Activated CD4-positive, alpha-beta memory T cell treated with anti-CD3 and anti-CD28 coated beads, Interleukin-2, amount 10 ng/mL, durations not matched to agents 7 days and 5 days (primary cell): ENCODE measurements at regions of chr9 and their contacts with region 1.

Region 1: DNA sequence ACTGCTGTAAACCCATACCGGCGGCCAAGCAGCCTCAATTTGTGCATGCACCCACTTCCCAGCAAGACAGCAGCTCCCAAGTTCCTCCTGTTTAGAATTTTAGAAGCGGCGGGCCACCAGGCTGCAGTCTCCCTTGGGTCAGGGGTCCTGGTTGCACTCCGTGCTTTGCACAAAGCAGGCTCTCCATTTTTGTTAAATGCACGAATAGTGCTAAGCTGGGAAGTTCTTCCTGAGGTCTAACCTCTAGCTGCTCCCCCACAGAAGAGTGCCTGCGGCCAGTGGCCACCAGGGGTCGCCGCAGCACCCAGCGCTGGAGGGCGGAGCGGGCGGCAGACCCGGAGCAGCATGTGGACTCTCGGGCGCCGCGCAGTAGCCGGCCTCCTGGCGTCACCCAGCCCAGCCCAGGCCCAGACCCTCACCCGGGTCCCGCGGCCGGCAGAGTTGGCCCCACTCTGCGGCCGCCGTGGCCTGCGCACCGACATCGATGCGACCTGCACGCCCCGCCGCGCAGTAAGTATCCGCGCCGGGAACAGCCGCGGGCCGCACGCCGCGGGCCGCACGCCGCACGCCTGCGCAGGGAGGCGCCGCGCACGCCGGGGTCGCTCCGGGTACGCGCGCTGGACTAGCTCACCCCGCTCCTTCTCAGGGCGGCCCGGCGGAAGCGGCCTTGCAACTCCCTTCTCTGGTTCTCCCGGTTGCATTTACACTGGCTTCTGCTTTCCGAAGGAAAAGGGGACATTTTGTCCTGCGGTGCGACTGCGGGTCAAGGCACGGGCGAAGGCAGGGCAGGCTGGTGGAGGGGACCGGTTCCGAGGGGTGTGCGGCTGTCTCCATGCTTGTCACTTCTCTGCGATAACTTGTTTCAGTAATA is at the start of gene FXN:
- DNase-seq: peak; percentile 86
- H3K4me3 Mint-ChIP-seq: peak within 1 kb of the TSS; percentile 96
- H3K27ac Mint-ChIP-seq: peak within 1 kb of the TSS; percentile 84
- H3K4me1 Mint-ChIP-seq: peaks cover 32% of the 10 kb centered on the region
- H3K27me3 Mint-ChIP-seq: no peaks in the 10 kb centered on the region
- total RNA-seq, gene FXN: 21.8 to 22.5 TPM

Region 2: DNA sequence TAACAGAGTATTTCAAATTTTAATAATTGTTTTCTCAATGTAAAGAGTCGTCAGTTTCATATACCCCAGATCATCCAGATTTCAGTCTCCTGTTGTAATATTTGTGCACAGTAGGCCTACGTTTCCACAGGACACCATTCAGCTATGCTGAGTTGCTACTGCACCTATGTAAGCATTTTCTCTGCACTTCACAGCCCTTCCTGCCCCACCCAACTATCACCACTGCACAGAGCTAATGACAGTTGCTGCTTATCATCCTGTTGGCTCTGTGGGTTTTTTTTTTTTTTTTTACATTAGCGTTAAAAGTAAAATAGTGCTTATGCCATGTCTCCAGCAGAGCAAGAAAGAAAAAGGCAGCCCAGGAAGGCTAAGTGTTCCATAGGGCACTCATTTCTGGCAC is 15.9 kb before region 1 on chr9:
- CTCF ChIA-PET with region 1: interaction called, 33 read pairs
- POLR2A ChIA-PET with region 1: interaction called, 21 read pairs
- DNase-seq: peak; percentile 73
- H3K4me3 Mint-ChIP-seq: peak overlapping the region; percentile 21
- H3K27ac Mint-ChIP-seq: peak overlapping the region; percentile 91
- H3K4me1 Mint-ChIP-seq: peaks cover 60% of the 10 kb centered on the region
- H3K27me3 Mint-ChIP-seq: peaks cover 21% of the 10 kb centered on the region

Region 3: DNA sequence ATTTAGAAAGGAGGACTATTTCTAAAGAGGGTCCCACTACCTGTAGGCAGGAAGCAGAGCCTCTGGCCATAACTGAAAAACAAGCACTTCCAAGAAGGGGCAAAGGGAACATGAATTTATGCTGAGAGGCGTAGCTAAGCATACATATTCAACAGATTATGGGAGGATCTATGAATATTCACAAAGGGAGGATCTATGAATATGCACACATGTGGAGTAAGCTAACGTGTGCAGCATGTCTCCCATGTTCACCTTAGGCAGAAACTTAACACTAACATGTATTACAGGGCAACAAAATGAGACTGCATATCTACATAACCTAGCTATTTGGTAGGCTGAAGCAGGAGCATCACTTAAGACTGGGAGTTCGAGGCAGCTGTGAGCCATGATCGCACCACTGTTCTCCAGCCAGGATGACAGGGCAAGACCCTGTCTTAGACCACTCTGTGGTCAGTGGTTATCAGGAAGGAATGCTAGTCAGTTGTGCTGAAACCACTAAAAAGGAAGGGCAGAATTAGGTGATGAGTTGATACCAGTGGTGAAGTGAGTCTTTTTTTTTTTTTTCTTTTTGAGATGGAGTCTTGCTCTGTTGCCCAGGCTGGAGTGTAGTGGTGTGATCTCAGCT is 20.6 kb after region 1 on chr9:
- CTCF ChIA-PET with region 1: interaction called, 25 read pairs
- POLR2A ChIA-PET with region 1: no interaction called
- DNase-seq: no peak
- H3K4me3 Mint-ChIP-seq: no peak overlapping the region
- H3K27ac Mint-ChIP-seq: no peak overlapping the region
- H3K4me1 Mint-ChIP-seq: peaks cover 18% of the 10 kb centered on the region
- H3K27me3 Mint-ChIP-seq: no peaks in the 10 kb centered on the region

Region 4: GRCh38 chr9:69180670-69181069 is 145.0 kb after region 1 on chr9:
- CTCF ChIA-PET with region 1: interaction called, 19 read pairs
- POLR2A ChIA-PET with region 1: interaction called, 7 read pairs
- DNase-seq: peak; percentile 81
- H3K4me3 Mint-ChIP-seq: peak overlapping the region; percentile 38
- H3K27ac Mint-ChIP-seq: peak overlapping the region; percentile 86
- H3K4me1 Mint-ChIP-seq: peaks cover 64% of the 10 kb centered on the region
- H3K27me3 Mint-ChIP-seq: no peaks in the 10 kb centered on the region

Region 5: GRCh38 chr9:69199769-69200470 is 164.2 kb after region 1 on chr9:
- CTCF ChIA-PET with region 1: interaction called, 17 read pairs
- POLR2A ChIA-PET with region 1: interaction called, 4 read pairs
- DNase-seq: peak; percentile 21
- H3K4me3 Mint-ChIP-seq: peak overlapping the region; percentile 10
- H3K27ac Mint-ChIP-seq: peak overlapping the region; percentile 74
- H3K4me1 Mint-ChIP-seq: peaks cover 50% of the 10 kb centered on the region
- H3K27me3 Mint-ChIP-seq: peaks cover 3% of the 10 kb centered on the region